ENCODE measurements at regions of chr14 and their contacts with region 1.

Region 1: GRCh38 chr14:23665375-23666192 is 29.4 kb downstream of the DHRS2 start:
- DNase-seq: peak; percentile 41
- ATAC-seq: peak; percentile 91
- H3K4me3 ChIP-seq: no peak overlapping the region
- H3K27ac ChIP-seq: no peak overlapping the region
- H3K4me1 ChIP-seq: no peaks in the 10 kb centered on the region
- H3K27me3 ChIP-seq: peaks cover 5% of the 10 kb centered on the region; the same call in 1 of the 2 replicates
- CTCF ChIP-seq: peak; percentile 52 to 69 (median 67); a peak in 5 of 6 replicates
- POLR2A ChIP-seq: no peak
- RAD21 ChIP-seq: peak; percentile 61

Region 2: GRCh38 chr14:23675906-23676305 is 10.3 kb after region 1 on chr14:
- CTCF ChIA-PET with region 1: interaction called, 10 read pairs
- POLR2A ChIA-PET with region 1: no interaction called
- RAD21 ChIA-PET with region 1: no interaction called
- intact Hi-C with region 1: no loop called
- DNase-seq: no peak
- ATAC-seq: no peak
- H3K4me3 ChIP-seq: no peak overlapping the region
- H3K27ac ChIP-seq: no peak overlapping the region
- H3K4me1 ChIP-seq: no peaks in the 10 kb centered on the region
- H3K27me3 ChIP-seq: no peaks in the 10 kb centered on the region
- CTCF ChIP-seq: no peak
- POLR2A ChIP-seq: no peak
- RAD21 ChIP-seq: no peak

Region 3: DNA sequence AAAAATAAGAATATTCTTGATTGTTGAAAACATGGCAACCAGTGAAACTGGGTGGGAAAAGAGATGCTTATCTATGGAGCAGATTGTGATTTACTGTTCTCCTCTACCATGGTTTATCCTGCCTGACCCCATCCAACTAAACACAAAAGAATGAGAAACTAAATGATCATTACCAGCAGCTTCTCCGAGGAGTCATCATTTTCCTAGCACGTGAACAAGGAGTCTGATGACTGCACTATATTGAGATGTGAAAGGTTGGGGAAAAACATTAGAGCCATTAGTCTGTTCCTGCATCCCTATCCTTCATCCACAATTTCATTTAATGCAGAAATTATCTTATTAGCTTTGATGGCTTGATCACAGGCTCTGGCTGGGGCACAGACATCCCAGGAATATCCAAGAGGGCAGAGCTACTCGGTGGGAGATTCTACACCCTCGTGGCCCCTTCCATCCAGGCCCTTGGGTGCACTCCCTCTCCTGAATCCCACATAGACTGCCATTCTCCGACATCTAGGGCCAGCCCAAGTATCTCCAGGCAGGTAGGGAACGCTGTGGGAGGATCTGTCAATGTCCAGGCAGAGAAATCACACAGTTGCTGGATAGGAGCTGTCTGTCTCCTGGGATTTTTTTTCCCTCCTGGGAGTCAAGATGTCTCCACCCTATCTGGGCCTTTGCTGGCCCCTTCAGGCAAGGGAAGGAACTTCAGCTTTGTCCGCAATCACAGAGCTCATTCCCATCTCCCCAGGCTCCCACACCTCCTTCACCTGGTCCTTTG is 244.7 kb after region 1 on chr14:
- CTCF ChIA-PET with region 1: interaction called, 47 read pairs
- POLR2A ChIA-PET with region 1: no interaction called
- RAD21 ChIA-PET with region 1: interaction called, 6 to 11 read pairs
- intact Hi-C with region 1: loop called (anchors 1 kb)
- DNase-seq: peak; percentile 38
- ATAC-seq: peak; percentile 98
- H3K4me3 ChIP-seq: no peak overlapping the region
- H3K27ac ChIP-seq: no peak overlapping the region
- H3K4me1 ChIP-seq: no peaks in the 10 kb centered on the region
- H3K27me3 ChIP-seq: no peaks in the 10 kb centered on the region
- CTCF ChIP-seq: peak; percentile 83 to 93 (median 85)
- POLR2A ChIP-seq: no peak
- RAD21 ChIP-seq: peak; percentile 85

Region 4: GRCh38 chr14:23929822-23930294 is 264.3 kb after region 1 on chr14:
- CTCF ChIA-PET with region 1: interaction called, 6 read pairs
- POLR2A ChIA-PET with region 1: no interaction called
- RAD21 ChIA-PET with region 1: interaction called in 1 of 2 experiments, 3 read pairs
- intact Hi-C with region 1: loop called (anchors 1 kb)
- DNase-seq: peak; percentile 59
- ATAC-seq: peak; percentile 99
- H3K4me3 ChIP-seq: no peak overlapping the region
- H3K27ac ChIP-seq: no peak overlapping the region
- H3K4me1 ChIP-seq: no peaks in the 10 kb centered on the region
- H3K27me3 ChIP-seq: no peaks in the 10 kb centered on the region
- CTCF ChIP-seq: peak; percentile 80 to 97 (median 95)
- POLR2A ChIP-seq: no peak
- RAD21 ChIP-seq: peak; percentile 69

Region 5: DNA sequence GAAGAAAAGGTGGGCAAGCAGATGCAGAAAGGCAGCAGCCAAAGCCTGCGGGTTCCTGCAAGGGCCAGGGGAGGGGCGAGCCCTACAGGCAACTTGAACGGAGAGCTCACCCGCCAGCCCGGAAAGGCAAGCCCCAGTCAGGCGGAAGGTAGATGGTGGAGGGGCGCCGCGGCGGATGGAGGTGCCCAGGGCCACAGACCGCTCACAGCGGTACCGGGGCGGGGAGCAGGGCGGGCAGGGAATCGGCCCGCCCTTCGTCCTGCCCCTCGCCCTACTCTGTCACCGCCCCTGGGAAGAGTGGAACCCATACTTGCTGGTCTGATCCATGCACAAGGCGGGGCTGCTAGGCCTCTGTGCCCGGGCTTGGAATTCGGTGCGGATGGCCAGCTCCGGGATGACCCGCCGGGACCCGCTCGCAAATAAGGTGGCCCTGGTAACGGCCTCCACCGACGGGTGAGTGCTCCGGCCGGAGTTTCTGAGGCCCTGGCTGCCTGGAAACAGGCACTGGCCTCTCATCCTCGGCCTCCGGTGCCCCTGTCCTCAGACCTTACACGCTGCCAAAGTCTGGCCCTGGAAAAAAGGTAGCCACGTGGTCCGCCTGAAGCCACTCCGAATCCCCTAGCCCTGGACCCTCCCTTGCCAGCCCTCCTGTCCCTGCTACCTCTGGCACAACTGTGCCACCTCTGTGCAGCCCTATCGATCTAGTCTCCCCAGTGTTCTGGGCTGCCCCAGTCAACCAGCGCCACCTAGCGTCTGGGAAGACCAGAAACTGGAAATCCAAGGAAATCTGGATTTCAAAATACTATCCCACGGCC is 288.1 kb after region 1 on chr14 and contains the start of gene DHRS4:
- CTCF ChIA-PET with region 1: interaction called, 3 read pairs
- POLR2A ChIA-PET with region 1: no interaction called
- RAD21 ChIA-PET with region 1: no interaction called
- intact Hi-C with region 1: loop called (anchors 2 kb)
- DNase-seq: peak; percentile 67
- ATAC-seq: peak; percentile 98
- H3K4me3 ChIP-seq: peak within 1 kb of the TSS; percentile 85 to 87
- H3K27ac ChIP-seq: peak within 1 kb of the TSS; percentile 96
- H3K4me1 ChIP-seq: peaks cover 0 to 9% of the 10 kb centered on the region in 2 experiments; a peak in 2 of 4 replicates
- H3K27me3 ChIP-seq: no peaks in the 10 kb centered on the region
- CTCF ChIP-seq: peak; percentile 63 to 93 (median 92); a peak in 5 of 6 replicates
- POLR2A ChIP-seq: peak; percentile 66
- RAD21 ChIP-seq: peak; percentile 56; the same call in 1 of the 2 replicates
- total RNA-seq, gene DHRS4: 21.8 TPM

Measured in HCT116 (cell line).